Posterior cingulate gyrus (tissue), 11 donors: ENCODE measurements at regions of chr11 and their contacts with region 1.

Region 1: GRCh38 chr11:116454020-116454645 is 318.7 kb downstream of the BUD13 start:
- DNase-seq: peak in 6 of 10 donors; percentile 38 to 90 (median 48)

Region 2: GRCh38 chr11:116579031-116579653 is 125.0 kb after region 1 on chr11:
- intact Hi-C with region 1: no loop called
- DNase-seq: peak in 5 of 10 donors; percentile 24 to 83 (median 37)

Region 3: DNA sequence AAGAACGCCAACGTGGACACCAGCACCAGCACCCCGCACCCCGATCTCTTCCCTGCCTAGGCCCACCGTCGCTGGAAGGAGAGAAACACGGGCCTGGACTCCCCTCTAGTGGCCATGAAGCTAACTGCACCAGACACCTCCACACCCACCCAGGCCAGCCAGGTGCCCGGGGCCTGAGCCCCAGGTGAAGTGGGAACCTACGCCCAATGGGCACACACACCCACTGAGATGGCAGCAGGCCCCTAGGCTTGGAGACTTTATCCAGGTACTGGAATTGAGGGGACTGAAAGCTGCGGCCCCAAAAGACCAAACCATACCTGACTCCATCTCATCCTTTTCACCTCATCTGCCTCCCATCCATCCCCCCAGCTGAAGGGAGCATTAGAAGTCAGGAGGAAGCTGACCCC is 237.6 kb after region 1 on chr11:
- intact Hi-C with region 1: loop called (anchors 2 kb)
- DNase-seq: peak in 8 of 10 donors; percentile 54 to 94 (median 64)